Sciatic nerve (tissue), 2 donors: ENCODE measurements at regions of chr18 and their contacts with region 1.

Region 1: GRCh38 chr18:30132958-30133357 is 909.6 kb downstream of the DSC3 start:
- DNase-seq: no peak
- ATAC-seq: no peak

Region 2: GRCh38 chr18:28771849-28772248 is 1361.1 kb before region 1 on chr18:
- intact Hi-C with region 1: no loop called
- DNase-seq: no peak
- ATAC-seq: peak; percentile 81

Region 3: GRCh38 chr18:29605365-29605764 is 527.6 kb before region 1 on chr18:
- intact Hi-C with region 1: loop called (anchors 5 kb)
- DNase-seq: no peak
- ATAC-seq: no peak